Caco-2 (cell line): ENCODE measurements at regions of chr4 and their contacts with region 1.

Region 1: DNA sequence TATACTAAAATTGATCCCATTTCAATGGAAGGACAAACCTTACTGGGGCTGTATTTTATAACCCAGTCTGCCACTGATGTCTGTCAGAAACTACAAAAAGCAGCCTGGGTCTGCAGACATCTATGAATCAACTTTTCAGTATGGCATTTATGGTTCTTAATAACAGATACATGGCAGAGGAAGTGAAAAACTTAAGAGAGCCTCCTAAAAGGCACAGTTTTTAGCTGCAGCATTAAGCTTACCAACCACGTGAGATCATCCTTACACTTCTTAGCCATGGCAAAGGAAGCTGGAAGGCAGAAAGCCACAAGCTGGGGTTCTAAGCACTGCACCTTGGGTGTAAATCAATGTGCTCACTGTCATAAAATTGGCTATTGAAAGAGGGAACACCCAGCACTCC is 16.6 kb upstream of the UGT2B17 start:
- DNase-seq: no peak
- H3K4me3 ChIP-seq: no peak overlapping the region
- H3K4me3 Mint-ChIP-seq: no peak overlapping the region
- H3K27ac Mint-ChIP-seq: peak overlapping the region; percentile 53
- H3K4me1 ChIP-seq: peaks cover 6% of the 10 kb centered on the region
- H3K4me1 Mint-ChIP-seq: peaks cover 13% of the 10 kb centered on the region
- H3K27me3 ChIP-seq: no peaks in the 10 kb centered on the region
- H3K27me3 Mint-ChIP-seq: no peaks in the 10 kb centered on the region
- CTCF ChIP-seq: no peak

Region 2: GRCh38 chr4:70236125-70236524 is 1643.5 kb after region 1 on chr4:
- CTCF ChIA-PET with region 1: no interaction called
- POLR2A ChIA-PET with region 1: no interaction called
- intact Hi-C with region 1: loop called (anchors 5 kb)
- DNase-seq: no peak
- H3K4me3 ChIP-seq: no peak overlapping the region
- H3K4me3 Mint-ChIP-seq: no peak overlapping the region
- H3K27ac Mint-ChIP-seq: no peak overlapping the region
- H3K4me1 ChIP-seq: peaks cover 18% of the 10 kb centered on the region
- H3K4me1 Mint-ChIP-seq: peaks cover 23% of the 10 kb centered on the region
- H3K27me3 ChIP-seq: no peaks in the 10 kb centered on the region
- H3K27me3 Mint-ChIP-seq: no peaks in the 10 kb centered on the region
- CTCF ChIP-seq: no peak